Panc1 (cell line): ENCODE measurements at regions of chr2 and their contacts with region 1.

Region 1: DNA sequence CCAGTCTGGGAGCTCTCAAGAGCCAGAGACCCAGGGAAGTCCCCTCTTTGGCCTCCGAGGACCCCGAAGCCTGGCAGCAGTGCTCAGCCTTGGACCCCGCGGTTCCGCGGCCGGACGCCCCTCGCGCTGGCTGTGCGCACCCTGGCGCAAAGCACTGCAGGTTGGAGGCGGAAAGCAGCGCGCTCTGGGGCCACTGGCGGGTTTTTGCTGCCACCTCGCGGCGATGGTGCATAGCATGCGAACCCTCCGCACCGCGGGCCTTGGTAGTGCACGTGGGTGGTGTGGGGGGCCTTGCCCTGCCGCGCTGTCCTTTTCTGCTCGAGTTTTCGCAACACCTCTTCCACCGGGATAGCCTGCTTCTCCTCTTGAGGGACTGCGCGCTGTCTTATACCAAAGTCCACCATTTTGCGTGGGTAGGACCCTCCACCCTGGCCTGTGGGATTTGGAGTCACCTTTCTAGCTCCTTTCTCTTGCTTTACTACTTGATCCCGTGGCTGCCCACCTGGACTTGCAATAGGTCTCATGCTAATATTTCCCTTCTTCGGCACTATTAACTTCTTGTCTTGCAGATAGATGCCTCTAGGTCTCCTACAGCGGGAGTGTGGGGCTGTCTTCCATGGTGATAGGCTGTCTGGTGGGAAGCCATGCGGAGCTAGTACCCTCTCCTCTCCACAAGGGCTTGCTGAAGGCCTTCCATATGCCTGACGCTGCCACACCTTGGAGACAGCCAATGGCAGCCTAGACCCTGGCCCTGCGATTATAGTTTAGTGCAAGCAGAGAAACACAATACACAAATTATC is 14.3 kb downstream of the SIX3 start:
- DNase-seq: no peak
- ATAC-seq: peak; percentile 87
- H3K4me3 ChIP-seq: peak overlapping the region; percentile 32 to 49
- H3K27ac ChIP-seq: no peak overlapping the region
- H3K4me1 ChIP-seq: 0 out of 2 replicates have a peak, but pooled peaks cover 4% of the 10 kb centered on the region
- H3K27me3 ChIP-seq: no peaks in the 10 kb centered on the region; the same call in 1 of the 2 replicates
- CTCF ChIP-seq: peak; percentile 96

Region 2: GRCh38 chr2:44044281-44044720 is 911.5 kb before region 1 on chr2:
- CTCF ChIA-PET with region 1: no interaction called
- POLR2A ChIA-PET with region 1: no interaction called
- in situ Hi-C with region 1: no loop called
- intact Hi-C with region 1: loop called (anchors 10 kb)
- DNase-seq: peak; percentile 68
- ATAC-seq: peak; percentile 100
- H3K4me3 ChIP-seq: no peak overlapping the region
- H3K27ac ChIP-seq: peak overlapping the region; percentile 67
- H3K4me1 ChIP-seq: 0 out of 2 replicates have a peak, but pooled peaks cover 4% of the 10 kb centered on the region
- H3K27me3 ChIP-seq: no peaks in the 10 kb centered on the region
- CTCF ChIP-seq: peak; percentile 92

Region 3: DNA sequence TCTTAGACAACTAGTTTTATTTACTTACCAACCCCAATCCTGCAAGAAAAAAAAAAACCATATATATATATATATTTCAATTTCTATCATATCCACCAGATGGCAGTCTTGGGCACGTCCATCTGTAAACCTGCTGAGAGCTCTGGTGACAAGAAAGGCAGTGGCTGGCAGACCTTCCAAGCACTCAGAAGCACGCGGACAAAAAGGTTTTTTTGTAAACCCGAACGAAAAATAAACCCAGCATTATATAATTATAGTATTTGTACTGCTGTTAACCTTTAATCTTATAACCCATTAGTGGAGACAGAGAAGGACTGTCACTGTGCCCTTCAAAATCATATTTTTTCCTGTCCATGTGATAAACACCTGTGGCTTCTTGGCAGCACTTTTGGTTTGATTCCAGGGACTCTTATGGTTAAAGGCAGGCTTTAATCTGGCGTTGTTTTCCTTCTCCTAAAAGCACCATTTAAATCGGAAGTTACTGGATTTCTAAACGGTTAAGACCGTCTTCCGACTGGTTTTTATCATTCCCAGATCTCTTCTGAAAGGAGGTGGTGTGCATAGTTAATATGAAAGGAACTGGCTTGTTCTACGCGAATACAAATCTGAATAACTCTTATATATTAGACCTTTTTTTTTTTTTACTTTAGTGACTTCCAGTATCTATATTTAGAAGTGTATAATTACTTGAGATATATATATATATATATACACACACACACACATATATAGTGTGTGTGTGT is 711.5 kb before region 1 on chr2:
- CTCF ChIA-PET with region 1: interaction called, 4 read pairs
- POLR2A ChIA-PET with region 1: no interaction called
- in situ Hi-C with region 1: no loop called
- intact Hi-C with region 1: loop called (anchors 10 kb)
- DNase-seq: peak; percentile 61
- ATAC-seq: peak; percentile 77
- H3K4me3 ChIP-seq: peak overlapping the region; percentile 21 to 38
- H3K27ac ChIP-seq: peak overlapping the region; percentile 81
- H3K4me1 ChIP-seq: peaks cover 23% of the 10 kb centered on the region
- H3K27me3 ChIP-seq: no peaks in the 10 kb centered on the region
- CTCF ChIP-seq: peak; percentile 80

Region 4: GRCh38 chr2:44392338-44392943 is 563.4 kb before region 1 on chr2:
- CTCF ChIA-PET with region 1: interaction called, 7 read pairs
- POLR2A ChIA-PET with region 1: no interaction called
- in situ Hi-C with region 1: no loop called
- intact Hi-C with region 1: loop called (anchors 5 kb)
- DNase-seq: peak; percentile 8
- ATAC-seq: no peak
- H3K4me3 ChIP-seq: no peak overlapping the region
- H3K27ac ChIP-seq: no peak overlapping the region
- H3K4me1 ChIP-seq: no peaks in the 10 kb centered on the region; the same call in 1 of the 2 replicates
- H3K27me3 ChIP-seq: no peaks in the 10 kb centered on the region
- CTCF ChIP-seq: peak; percentile 69; the same call in 1 of the 2 replicates

Region 5: DNA sequence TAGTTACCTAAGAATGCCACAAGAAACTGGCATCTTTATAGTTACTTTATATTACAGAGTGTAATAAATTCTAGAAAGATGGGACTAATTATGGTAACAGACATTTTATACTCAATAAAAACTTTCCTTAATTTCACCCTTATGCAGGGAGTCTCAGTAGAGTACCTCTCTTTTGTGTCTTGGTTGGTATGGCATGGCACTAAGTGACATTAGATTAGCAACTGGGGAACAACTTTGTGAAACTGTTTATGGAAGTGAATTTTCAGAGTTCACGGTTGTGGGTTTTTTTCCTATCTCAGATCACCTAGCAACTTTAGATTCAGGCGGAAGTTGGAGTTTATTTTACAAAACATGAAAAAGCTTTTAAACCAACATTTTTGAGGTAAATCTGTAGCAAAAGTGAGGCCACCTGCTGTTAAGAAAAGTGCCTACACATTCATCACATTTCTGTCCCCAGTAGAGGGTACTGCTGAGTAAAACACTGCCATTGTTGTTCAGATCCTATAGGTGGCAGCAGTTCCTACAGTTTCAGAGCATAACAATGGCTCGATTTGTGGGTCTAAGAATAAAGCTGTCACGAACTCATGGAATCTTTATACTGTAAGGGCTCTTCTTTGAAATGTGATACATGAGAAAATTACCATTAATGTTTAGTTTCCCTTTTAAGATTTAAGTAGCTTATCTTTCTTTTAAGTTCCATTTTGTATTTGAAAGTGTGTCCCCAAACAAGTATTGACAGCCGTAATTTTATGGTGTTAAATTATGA is 476.5 kb before region 1 on chr2:
- CTCF ChIA-PET with region 1: interaction called, 21 read pairs
- POLR2A ChIA-PET with region 1: no interaction called
- in situ Hi-C with region 1: no loop called
- intact Hi-C with region 1: loop called (anchors 2 kb)
- DNase-seq: peak; percentile 84
- ATAC-seq: peak; percentile 99
- H3K4me3 ChIP-seq: no peak overlapping the region
- H3K27ac ChIP-seq: no peak overlapping the region
- H3K4me1 ChIP-seq: no peaks in the 10 kb centered on the region
- H3K27me3 ChIP-seq: no peaks in the 10 kb centered on the region
- CTCF ChIP-seq: peak; percentile 96

Region 6: DNA sequence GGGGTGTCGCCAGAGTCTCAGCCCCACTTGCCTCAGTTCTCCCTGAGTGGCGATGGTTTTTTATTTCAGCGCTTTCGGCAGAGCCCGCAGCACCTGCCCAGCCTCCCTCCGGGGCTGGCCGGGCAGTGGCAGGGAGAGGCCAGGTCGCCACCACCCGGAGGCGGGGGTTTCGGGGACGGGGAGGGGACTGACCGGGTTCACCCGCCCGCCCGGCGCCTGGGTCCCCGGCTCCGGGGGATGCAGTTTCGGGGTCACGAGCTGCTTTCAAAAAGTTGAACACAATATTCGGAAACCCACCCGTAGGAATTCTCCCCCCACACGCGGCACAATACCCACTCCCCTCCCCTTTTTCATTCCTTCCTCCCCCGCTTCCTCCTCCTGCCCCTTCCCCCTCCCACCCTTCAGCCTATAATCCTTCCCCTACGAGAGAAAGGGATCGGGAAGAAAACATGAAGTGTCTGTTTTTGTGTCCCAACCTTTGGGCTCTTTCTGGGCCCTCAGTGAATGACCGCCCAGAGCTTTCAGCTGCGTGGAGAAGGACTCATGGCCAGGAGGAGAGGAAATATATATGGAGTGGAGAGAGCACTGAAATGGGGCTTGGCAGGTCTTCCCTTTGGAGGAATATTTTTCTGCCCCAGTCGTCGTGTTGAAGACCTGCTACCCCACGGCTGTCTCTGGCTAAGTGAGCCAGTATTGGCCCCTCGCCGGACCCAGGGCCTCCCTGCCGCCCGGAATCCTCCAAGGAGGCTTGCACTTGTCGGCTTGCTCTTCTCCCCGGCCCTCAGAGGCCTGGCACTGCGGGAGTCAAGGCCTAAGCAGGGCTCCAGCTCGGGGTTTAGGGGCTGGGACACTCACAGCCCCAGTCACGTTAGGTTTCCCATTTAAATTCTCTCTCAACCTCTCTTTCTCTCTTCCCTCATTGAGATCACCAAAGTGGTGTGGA is 16.4 kb before region 1 on chr2:
- CTCF ChIA-PET with region 1: interaction called, 10 read pairs
- POLR2A ChIA-PET with region 1: no interaction called
- in situ Hi-C with region 1: no loop called
- intact Hi-C with region 1: no loop called
- DNase-seq: no peak
- ATAC-seq: peak; percentile 10; the same call in 1 of the 2 replicates
- H3K4me3 ChIP-seq: peak overlapping the region; percentile 46 to 49
- H3K27ac ChIP-seq: no peak overlapping the region
- H3K4me1 ChIP-seq: 0 out of 2 replicates have a peak, but pooled peaks cover 5% of the 10 kb centered on the region
- H3K27me3 ChIP-seq: peaks cover 2% of the 10 kb centered on the region; the same call in 1 of the 2 replicates
- CTCF ChIP-seq: no peak

Region 7: DNA sequence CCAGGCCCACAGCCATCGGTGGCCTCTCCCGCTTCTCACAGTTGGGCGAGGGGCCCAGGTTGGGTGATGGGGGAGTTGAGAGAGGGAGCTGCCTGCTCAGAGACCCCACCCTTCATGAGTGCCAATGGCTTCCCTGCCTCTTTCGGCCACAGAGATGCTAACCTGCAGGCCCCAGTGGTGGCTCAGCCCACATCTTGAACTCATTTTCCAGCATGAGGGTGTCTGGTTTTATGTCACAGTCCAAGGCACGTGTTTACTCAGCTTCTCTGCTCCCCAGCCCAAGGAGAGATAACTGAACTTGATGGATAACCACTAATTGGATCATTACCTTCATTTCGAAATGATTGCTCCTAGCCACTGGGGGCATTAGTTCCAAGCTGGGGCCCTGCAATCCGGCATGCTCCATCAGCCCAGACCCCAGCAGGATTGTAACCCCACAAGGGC is 99.4 kb after region 1 on chr2:
- CTCF ChIA-PET with region 1: no interaction called
- POLR2A ChIA-PET with region 1: no interaction called
- in situ Hi-C with region 1: no loop called
- intact Hi-C with region 1: no loop called
- DNase-seq: no peak
- ATAC-seq: no peak
- H3K4me3 ChIP-seq: no peak overlapping the region
- H3K27ac ChIP-seq: no peak overlapping the region
- H3K4me1 ChIP-seq: no peaks in the 10 kb centered on the region
- H3K27me3 ChIP-seq: no peaks in the 10 kb centered on the region; the same call in 1 of the 2 replicates
- CTCF ChIP-seq: no peak

Region 8: GRCh38 chr2:45315861-45316260 is 360.1 kb after region 1 on chr2:
- CTCF ChIA-PET with region 1: no interaction called
- POLR2A ChIA-PET with region 1: no interaction called
- in situ Hi-C with region 1: no loop called
- intact Hi-C with region 1: no loop called
- DNase-seq: no peak
- ATAC-seq: no peak
- H3K4me3 ChIP-seq: no peak overlapping the region
- H3K27ac ChIP-seq: no peak overlapping the region
- H3K4me1 ChIP-seq: no peaks in the 10 kb centered on the region
- H3K27me3 ChIP-seq: no peaks in the 10 kb centered on the region
- CTCF ChIP-seq: no peak